A673 (cell line): ENCODE measurements at regions of chr9 and their contacts with region 1.

Region 1: DNA sequence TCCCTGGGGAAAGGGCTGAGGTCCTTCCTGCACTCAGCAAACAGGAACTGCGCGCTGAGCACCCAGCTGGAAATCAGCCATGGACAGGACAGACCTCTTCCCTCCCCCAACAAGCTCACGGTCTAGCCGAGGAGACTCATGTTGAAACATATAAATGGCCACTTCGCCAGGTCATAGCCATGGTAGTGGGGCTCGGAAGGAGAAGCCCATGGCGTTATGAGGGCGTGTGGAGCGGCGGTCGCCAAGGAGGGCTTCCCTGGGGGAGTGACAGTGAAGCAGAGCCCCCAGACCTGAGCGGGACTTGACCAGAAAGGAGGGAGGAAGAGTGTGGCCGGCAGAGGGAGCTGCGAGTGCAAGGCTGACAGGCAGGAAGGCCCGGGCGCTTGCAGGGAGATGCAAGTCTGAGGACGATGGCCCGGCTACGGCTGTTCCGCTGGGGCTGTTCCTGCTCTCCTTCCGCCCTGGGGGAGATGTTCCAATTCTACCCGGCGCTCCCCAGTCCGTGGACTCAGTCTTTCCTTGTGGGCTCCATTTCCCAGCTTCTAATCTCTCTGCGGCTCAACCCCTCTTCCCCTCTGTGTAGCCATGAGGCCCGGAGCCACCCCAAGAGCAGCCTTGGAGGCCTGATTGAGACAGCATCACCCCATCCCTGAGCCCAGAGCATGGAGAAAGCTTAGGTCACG is 43.9 kb upstream of the PRRC2B start:
- DNase-seq: peak; percentile 91
- H3K4me3 ChIP-seq: peak overlapping the region; percentile 39
- H3K27ac ChIP-seq: no peak overlapping the region
- H3K4me1 ChIP-seq: peaks cover 9% of the 10 kb centered on the region
- H3K27me3 ChIP-seq: no peaks in the 10 kb centered on the region
- CTCF ChIP-seq: peak; percentile 95

Region 2: GRCh38 chr9:131366761-131367401 is 16.9 kb after region 1 on chr9:
- CTCF ChIA-PET with region 1: interaction called, 11 read pairs
- POLR2A ChIA-PET with region 1: no interaction called
- intact Hi-C with region 1: no loop called
- DNase-seq: peak; percentile 55
- H3K4me3 ChIP-seq: no peak overlapping the region
- H3K27ac ChIP-seq: no peak overlapping the region
- H3K4me1 ChIP-seq: peaks cover 5% of the 10 kb centered on the region
- H3K27me3 ChIP-seq: no peaks in the 10 kb centered on the region
- CTCF ChIP-seq: peak; percentile 39

Region 3: GRCh38 chr9:131478421-131478868 is 128.4 kb after region 1 on chr9:
- CTCF ChIA-PET with region 1: interaction called, 4 read pairs
- POLR2A ChIA-PET with region 1: no interaction called
- intact Hi-C with region 1: loop called (anchors 1 kb)
- DNase-seq: peak; percentile 66
- H3K4me3 ChIP-seq: no peak overlapping the region
- H3K27ac ChIP-seq: no peak overlapping the region
- H3K4me1 ChIP-seq: no peaks in the 10 kb centered on the region
- H3K27me3 ChIP-seq: no peaks in the 10 kb centered on the region
- CTCF ChIP-seq: peak; percentile 74

Region 4: GRCh38 chr9:131747356-131747755 is 397.3 kb after region 1 on chr9:
- CTCF ChIA-PET with region 1: no interaction called
- POLR2A ChIA-PET with region 1: no interaction called
- intact Hi-C with region 1: loop called (anchors 5 kb)
- DNase-seq: peak; percentile 71
- H3K4me3 ChIP-seq: no peak overlapping the region
- H3K27ac ChIP-seq: no peak overlapping the region
- H3K4me1 ChIP-seq: no peaks in the 10 kb centered on the region
- H3K27me3 ChIP-seq: no peaks in the 10 kb centered on the region
- CTCF ChIP-seq: peak; percentile 65

Region 5: DNA sequence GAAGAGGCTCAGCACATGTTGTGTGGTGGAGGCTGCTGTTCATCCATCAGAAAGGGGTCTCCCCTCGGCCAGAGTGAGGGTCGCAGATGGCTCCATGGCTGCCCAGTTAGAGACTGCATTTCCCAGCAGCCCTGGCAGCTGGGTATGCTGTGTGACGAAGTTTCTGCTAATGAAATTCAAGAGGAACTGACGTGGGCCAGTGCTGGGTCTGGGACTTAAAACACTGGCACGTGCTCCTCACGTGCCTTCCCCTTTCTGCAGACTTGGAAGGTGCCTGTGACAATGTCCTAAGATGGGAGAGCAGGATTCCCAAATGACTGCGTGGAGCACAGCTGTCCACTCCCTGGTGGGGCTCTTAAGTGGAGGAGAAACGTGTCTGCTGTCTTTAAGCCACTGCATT is 504.3 kb after region 1 on chr9:
- CTCF ChIA-PET with region 1: no interaction called
- POLR2A ChIA-PET with region 1: no interaction called
- intact Hi-C with region 1: no loop called
- DNase-seq: no peak
- H3K4me3 ChIP-seq: no peak overlapping the region
- H3K27ac ChIP-seq: no peak overlapping the region
- H3K4me1 ChIP-seq: no peaks in the 10 kb centered on the region
- H3K27me3 ChIP-seq: no peaks in the 10 kb centered on the region
- CTCF ChIP-seq: no peak